Activated CD4-positive, alpha-beta memory T cell treated with anti-CD3 and anti-CD28 coated beads for 36 hours (primary cell): ENCODE measurements at regions of chr4 and their contacts with region 1.

Region 1: GRCh38 chr4:173257732-173258717 is 76.1 kb downstream of the HMGB2 start:
- DNase-seq: peak; percentile 73
- H3K4me3 Mint-ChIP-seq: no peak overlapping the region
- H3K27ac Mint-ChIP-seq: no peak overlapping the region
- H3K4me1 Mint-ChIP-seq: peaks cover 4% of the 10 kb centered on the region
- H3K27me3 Mint-ChIP-seq: no peaks in the 10 kb centered on the region

Region 2: GRCh38 chr4:173025131-173025530 is 232.9 kb before region 1 on chr4:
- CTCF ChIA-PET with region 1: interaction called, 11 read pairs
- POLR2A ChIA-PET with region 1: no interaction called
- intact Hi-C with region 1: loop called (anchors 1 kb)
- DNase-seq: no peak
- H3K4me3 Mint-ChIP-seq: no peak overlapping the region
- H3K27ac Mint-ChIP-seq: no peak overlapping the region
- H3K4me1 Mint-ChIP-seq: no peaks in the 10 kb centered on the region
- H3K27me3 Mint-ChIP-seq: no peaks in the 10 kb centered on the region

Region 3: DNA sequence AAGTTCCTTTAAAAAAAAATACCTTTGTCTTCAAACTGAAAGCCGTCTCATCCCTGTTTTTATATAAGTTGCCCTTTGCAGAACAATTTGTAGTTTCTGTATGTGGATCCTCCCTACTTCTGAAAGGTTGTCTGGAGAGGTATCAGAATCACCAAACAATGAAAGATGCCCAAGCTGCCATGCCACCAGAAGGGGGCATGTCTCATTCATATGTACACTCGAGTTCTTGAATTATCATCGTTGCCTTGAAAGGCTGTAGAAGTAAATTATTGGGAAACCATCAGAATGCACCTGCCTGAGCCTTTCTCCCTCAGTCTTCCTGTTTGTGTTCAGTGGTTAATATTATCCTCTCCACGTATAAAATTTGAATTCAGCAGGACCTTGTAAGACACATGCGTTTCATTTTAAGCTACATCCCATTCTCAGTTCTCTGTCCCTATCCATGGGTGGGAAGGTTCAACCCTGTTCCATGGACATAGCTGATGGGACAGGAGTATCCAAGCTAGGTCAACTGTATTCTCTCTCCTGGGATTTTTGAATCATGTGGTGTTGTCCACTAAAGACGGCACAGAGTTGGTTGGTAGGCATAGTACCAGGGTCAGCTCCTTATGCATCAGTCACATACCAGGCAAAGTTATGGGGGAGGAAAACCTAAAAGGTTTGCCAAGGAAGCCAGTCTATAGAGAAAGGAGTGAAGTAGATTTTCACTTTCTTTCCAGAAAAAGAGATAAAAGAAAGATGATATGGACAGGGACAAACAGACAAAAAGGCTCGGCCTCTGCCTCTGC is 65.5 kb before region 1 on chr4:
- CTCF ChIA-PET with region 1: interaction called, 4 read pairs
- POLR2A ChIA-PET with region 1: no interaction called
- intact Hi-C with region 1: loop called (anchors 2 kb)
- DNase-seq: no peak
- H3K4me3 Mint-ChIP-seq: no peak overlapping the region
- H3K27ac Mint-ChIP-seq: no peak overlapping the region
- H3K4me1 Mint-ChIP-seq: peaks cover 44% of the 10 kb centered on the region
- H3K27me3 Mint-ChIP-seq: no peaks in the 10 kb centered on the region